CD4-positive, alpha-beta T cell (primary cell): ENCODE measurements at regions of chr10 and their contacts with region 1.

Region 1: GRCh38 chr10:8898745-8899325 is 844.3 kb downstream of the GATA3 start:
- DNase-seq: peak in 2 of 14 experiments; percentile 6 to 28
- ATAC-seq: peak; percentile 57
- H3K4me3 ChIP-seq: no peak overlapping the region
- H3K4me3 Mint-ChIP-seq: no peak overlapping the region
- H3K27ac ChIP-seq: no peak overlapping the region
- H3K27ac Mint-ChIP-seq: no peak overlapping the region
- H3K4me1 ChIP-seq: no peaks in the 10 kb centered on the region
- H3K4me1 Mint-ChIP-seq: no peaks in the 10 kb centered on the region
- H3K27me3 ChIP-seq: no peaks in the 10 kb centered on the region
- H3K27me3 Mint-ChIP-seq: no peaks in the 10 kb centered on the region
- CTCF ChIP-seq: no peak

Region 2: GRCh38 chr10:8998751-8999150 is 99.9 kb after region 1 on chr10:
- CTCF ChIA-PET with region 1: no interaction called
- POLR2A ChIA-PET with region 1: no interaction called
- intact Hi-C with region 1: loop called in 1 of 2 experiments (anchors 10 kb)
- DNase-seq: no peak
- ATAC-seq: no peak
- H3K4me3 ChIP-seq: no peak overlapping the region
- H3K4me3 Mint-ChIP-seq: no peak overlapping the region
- H3K27ac ChIP-seq: no peak overlapping the region
- H3K27ac Mint-ChIP-seq: no peak overlapping the region
- H3K4me1 ChIP-seq: no peaks in the 10 kb centered on the region
- H3K4me1 Mint-ChIP-seq: peaks cover 4% of the 10 kb centered on the region
- H3K27me3 ChIP-seq: no peaks in the 10 kb centered on the region
- H3K27me3 Mint-ChIP-seq: no peaks in the 10 kb centered on the region
- CTCF ChIP-seq: no peak

Region 3: DNA sequence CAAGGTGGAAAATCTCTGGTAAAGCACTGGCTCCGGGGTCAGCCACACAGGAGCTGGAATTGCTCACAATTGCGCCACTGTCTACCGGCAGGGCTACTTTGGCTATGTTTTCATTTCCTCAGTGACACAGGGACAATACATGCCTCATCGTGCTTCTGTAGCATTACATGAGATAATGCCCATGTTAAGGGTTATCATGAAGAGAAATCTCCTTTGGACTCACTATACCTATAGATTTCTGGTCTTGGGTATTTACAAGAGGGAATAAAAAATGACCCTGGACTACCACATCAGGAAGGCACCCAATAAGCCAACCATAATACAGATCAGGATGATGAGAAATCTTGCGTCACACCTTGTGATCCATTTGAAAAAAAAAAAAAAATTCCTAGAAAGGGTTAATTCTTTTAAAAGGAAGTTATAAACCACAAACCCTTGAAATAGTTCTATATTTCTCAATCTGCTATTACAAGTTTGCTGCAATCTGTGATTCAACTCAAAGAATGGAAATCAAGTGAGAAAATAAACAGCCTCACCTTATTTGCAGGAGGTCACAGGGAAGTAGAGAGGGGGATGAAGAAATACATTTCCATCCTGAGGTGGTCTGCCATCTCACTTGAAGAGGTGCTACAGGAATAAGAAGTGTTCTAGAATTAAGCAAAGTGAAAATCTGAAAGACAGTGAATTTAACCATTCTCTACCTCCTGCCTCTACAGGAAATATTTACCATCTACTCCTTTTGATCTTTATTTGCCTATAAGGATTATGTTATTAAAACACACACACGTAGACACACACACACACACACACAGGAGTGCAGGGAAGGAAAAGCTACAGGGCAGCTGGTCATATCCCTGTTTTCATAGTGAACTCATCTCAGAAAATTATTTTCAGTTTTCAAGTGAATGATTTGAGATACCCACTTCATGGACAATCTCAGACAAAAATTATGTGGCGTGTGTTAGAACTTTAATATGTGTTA is 1887.6 kb after region 1 on chr10:
- CTCF ChIA-PET with region 1: no interaction called
- POLR2A ChIA-PET with region 1: no interaction called
- intact Hi-C with region 1: no loop called
- DNase-seq: peak in 3 of 14 experiments; percentile 1 to 39 (median 17)
- ATAC-seq: no peak
- H3K4me3 ChIP-seq: no peak overlapping the region
- H3K4me3 Mint-ChIP-seq: no peak overlapping the region
- H3K27ac ChIP-seq: no peak overlapping the region
- H3K27ac Mint-ChIP-seq: no peak overlapping the region
- H3K4me1 ChIP-seq: no peaks in the 10 kb centered on the region
- H3K4me1 Mint-ChIP-seq: peaks cover 12% of the 10 kb centered on the region
- H3K27me3 ChIP-seq: no peaks in the 10 kb centered on the region
- H3K27me3 Mint-ChIP-seq: peaks cover 7% of the 10 kb centered on the region
- CTCF ChIP-seq: no peak